Mucosa of descending colon (tissue), 3 donors: ENCODE measurements at regions of chr4 and their contacts with region 1.

Region 1: GRCh38 chr4:186651624-186652023 is 72.0 kb downstream of the FAT1 start:
- DNase-seq: peak in 1 of 3 donors; percentile 23
- ATAC-seq: peak; percentile 58
- H3K4me3 ChIP-seq: no peak overlapping the region
- H3K4me1 ChIP-seq: no peaks in the 10 kb centered on the region
- CTCF ChIP-seq: no peak

Region 2: DNA sequence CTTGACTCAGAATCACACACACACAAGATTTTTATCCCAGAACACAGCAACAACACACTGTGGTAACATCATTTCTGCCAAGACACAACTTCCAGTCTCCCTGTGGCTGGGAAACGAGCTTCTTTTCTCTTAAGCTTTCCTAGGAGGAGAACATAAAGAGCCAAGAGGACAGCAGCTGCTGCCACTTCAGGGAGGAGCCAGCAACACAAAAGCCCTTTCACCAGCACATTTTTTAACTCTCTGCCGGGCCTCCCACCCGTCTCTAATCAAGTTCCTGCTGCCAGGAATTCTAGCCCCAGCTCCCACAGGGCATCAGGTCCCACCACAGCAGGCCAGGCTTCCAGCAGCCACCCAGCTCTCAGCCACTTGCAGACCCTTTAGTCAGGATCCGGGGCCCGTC is 49.6 kb after region 1 on chr4:
- intact Hi-C with region 1: loop called in 1 of 2 experiments (anchors 10 kb)
- DNase-seq: peak in 2 of 3 donors; percentile 32 to 55
- ATAC-seq: peak; percentile 47
- H3K4me3 ChIP-seq: no peak overlapping the region
- H3K4me1 ChIP-seq: peaks cover 46% of the 10 kb centered on the region
- CTCF ChIP-seq: no peak

Region 3: DNA sequence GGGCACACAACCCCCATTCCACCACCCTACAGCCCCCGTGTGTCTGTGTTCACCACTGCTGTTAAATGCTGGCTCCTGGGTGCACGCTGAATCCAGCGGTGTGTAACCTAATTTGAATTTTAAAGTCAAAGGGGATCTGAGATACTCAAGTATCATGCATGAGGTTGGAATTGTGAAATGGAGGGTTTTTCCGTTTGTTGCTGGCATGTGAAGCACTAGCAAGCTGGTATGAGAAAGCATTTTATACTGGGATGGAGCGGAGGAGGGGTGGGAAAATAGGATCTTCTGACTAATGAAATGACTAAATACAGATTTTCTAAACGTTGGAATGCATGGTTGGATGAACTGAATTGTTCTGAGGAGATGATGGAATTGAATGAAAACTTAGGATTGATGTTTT is 109.0 kb after region 1 on chr4:
- intact Hi-C with region 1: no loop called
- DNase-seq: no peak
- ATAC-seq: no peak
- H3K4me3 ChIP-seq: no peak overlapping the region
- H3K4me1 ChIP-seq: peaks cover 9% of the 10 kb centered on the region
- CTCF ChIP-seq: no peak